ENCODE measurements at regions of chr14 and their contacts with region 1.

Region 1: DNA sequence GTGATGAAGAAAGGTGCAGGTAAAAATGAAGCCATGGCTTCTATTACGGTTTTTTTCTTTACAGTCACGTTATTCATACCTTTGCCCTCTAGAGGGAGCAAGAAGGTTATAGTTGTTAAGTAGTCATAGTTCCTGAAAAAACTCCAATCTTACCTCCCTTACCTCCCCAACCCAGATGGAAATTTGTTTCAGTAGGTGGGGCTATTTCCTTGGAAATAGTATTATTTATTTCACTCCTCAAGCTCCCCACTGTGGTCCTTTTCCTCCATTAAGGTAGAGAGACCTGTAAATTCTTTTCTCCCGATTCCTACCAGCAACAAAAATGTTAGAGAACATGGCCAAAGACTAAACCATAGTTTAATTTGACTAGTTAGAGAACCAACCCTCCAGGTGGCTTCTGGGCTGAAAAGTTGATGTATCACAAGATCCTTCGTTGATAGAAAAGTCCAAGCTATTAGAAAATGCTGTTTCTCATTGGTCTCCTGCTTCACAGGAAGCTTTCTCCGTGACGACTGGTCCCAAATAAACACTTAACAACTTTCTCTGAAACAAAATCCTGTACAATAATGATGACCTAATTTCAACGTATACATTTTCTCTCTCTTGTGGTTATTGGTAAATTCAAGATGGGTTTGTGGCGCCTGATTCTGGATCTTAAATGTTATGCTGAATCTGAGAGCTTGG is 43.5 kb downstream of the TMX1 start:
- DNase-seq: no peak
- H3K4me3 ChIP-seq: no peak overlapping the region
- H3K27ac ChIP-seq: no peak overlapping the region
- H3K4me1 ChIP-seq: peaks cover 0 to 18% (median 0%) of the 10 kb centered on the region in 6 donors
- H3K27me3 ChIP-seq: no peaks in the 10 kb centered on the region
- CTCF ChIP-seq: peak; percentile 42 to 81 (median 71)
- POLR2A ChIP-seq: no peak

Region 2: DNA sequence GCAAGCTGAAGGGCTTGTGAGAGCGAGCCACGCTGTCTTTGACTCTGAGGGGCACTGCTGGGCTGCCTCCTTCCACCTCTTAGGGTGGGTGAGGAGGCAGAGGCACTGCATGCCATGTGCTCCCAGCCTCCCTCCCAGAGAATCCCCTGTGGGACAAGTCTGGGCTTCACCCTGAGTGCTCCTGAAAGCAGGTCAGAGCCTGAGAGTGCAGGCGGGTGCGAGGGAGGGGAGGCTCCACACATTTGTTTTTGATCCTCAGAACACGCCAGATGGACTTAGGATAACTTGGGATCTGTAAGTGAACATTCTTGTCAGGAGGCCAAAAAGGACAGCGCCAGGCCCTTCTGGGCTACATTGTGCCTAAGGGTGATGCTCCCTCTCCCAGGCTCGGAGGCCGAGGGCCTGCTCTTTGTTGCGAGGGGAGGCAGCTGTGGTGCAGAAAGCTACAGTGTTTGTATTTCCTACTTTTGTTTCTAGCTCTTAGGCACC is 111.9 kb after region 1 on chr14:
- intact Hi-C with region 1: no loop called
- DNase-seq: no peak
- H3K4me3 ChIP-seq: no peak overlapping the region
- H3K27ac ChIP-seq: peak overlapping the region in 7 of 8 donors; percentile 24 to 67 (median 43)
- H3K4me1 ChIP-seq: peaks cover 0 to 17% (median 0%) of the 10 kb centered on the region in 6 donors
- H3K27me3 ChIP-seq: peaks cover 0 to 3% (median 0%) of the 10 kb centered on the region in 7 donors
- CTCF ChIP-seq: no peak
- POLR2A ChIP-seq: no peak

Region 3: GRCh38 chr14:51780006-51780692 is 496.6 kb after region 1 on chr14:
- intact Hi-C with region 1: loop called (anchors 5 kb)
- DNase-seq: peak; percentile 83
- H3K4me3 ChIP-seq: no peak overlapping the region
- H3K27ac ChIP-seq: no peak overlapping the region
- H3K4me1 ChIP-seq: peaks cover 7 to 30% (median 12%) of the 10 kb centered on the region in 6 donors
- H3K27me3 ChIP-seq: peaks cover 0 to 10% (median 0%) of the 10 kb centered on the region in 7 donors
- CTCF ChIP-seq: peak; percentile 57 to 88 (median 82)
- POLR2A ChIP-seq: no peak

Measured in spleen (tissue), 13 donors.